ENCODE measurements at regions of chr18 and their contacts with region 1.

Region 1: DNA sequence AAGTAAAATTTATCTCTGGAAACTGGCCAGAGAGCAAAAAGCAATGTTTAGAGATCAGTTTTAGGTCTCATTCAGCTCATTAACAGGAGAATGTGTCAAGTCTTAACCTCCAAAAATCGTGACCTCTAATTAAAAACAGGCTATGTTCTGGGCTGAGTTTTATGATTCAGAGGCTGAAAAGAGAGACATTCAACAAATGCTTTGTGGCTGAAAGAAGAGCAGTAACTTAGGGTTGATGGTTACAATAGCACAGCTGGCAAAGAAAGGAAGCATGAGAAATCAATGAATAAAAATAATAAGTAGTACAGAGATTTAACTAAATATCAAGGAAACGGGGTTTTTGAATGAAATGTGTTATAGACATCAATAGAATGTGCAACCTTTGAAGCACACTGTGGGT is 13.1 kb downstream of the TGIF1 start:
- DNase-seq: no peak
- H3K4me3 ChIP-seq: no peak overlapping the region
- H3K27ac ChIP-seq: no peak overlapping the region
- H3K27me3 ChIP-seq: no peaks in the 10 kb centered on the region
- CTCF ChIP-seq: no peak

Region 2: DNA sequence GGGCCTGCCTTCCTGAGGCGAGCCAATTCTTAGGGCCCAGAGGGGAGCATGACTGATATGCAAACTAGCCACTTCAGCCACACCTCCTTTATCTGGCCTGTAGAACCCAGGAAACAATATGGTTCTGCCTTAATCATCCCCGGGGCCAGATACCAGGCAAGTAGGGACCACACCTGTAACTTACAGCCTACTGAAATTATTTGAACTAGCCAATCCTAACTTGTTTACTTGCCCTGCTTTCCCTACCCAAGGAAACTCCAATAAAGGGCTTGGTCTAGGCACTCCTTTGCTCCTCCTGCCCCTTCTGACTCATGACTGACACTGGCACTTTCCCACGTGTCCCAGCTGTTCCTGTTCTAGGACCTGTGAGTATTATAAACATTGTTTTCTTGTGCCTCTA is 300.9 kb before region 1 on chr18:
- intact Hi-C with region 1: no loop called
- DNase-seq: no peak
- H3K4me3 ChIP-seq: no peak overlapping the region
- H3K27ac ChIP-seq: no peak overlapping the region
- H3K27me3 ChIP-seq: no peaks in the 10 kb centered on the region
- CTCF ChIP-seq: no peak

Region 3: DNA sequence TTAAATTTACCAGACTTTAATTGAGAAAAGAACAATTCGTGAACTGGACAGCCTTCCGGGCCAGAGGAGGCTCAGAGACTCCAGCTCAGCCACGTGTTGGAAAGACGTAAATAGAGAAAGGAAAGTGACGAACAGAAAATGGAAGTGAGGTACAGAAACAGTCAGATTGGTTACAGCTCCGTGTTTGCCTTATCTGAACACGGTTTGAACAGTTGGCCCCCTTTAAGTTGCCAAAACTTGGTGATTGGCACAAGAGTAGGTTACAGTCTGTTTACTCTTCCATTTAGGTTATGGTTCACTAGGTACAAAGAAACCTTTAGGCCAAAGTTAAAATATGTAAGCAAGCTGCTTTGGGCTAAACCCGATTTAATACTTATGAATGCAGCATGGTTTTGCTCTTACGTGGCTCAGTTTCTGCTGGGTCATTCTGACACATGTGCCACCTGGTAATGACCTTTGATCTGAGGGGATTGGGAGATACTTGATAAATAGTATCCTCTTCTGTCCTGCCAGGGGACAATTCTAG is 78.3 kb before region 1 on chr18:
- intact Hi-C with region 1: no loop called
- DNase-seq: no peak
- H3K4me3 ChIP-seq: no peak overlapping the region
- H3K27ac ChIP-seq: no peak overlapping the region
- H3K27me3 ChIP-seq: peaks cover 0 to 3% (median 0%) of the 10 kb centered on the region in 45 donors
- CTCF ChIP-seq: no peak

Region 4: DNA sequence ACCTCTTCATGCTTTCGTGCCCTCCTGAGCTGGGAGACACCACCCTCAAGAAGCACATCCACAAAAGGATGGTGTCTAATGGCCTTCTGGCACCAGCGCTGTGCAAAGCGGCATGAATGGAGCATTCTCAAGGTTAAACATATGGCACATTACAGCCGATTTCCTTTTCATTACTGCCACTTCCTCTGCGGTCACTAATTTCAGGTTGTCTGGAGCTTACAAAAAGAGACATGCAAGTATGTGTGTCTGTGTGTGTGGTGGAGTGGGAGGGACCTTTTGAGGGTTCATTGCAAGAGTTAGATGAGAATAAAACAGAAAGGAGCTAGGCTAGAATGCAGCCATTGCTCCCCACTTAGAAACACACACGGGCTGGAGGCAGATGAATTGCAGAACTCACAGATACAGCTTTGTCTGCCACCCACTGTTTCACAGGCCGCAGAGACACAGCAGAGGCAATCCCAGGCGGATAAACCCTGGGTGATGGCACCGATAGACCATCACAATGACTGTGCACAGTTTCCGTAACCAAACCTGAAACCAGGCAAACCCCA is 62.9 kb after region 1 on chr18:
- intact Hi-C with region 1: loop called in 1 of 2 experiments (anchors 5 kb)
- DNase-seq: peak in 9 of 10 donors; percentile 47 to 70 (median 63)
- H3K4me3 ChIP-seq: peak overlapping the region in 54 of 59 donors; percentile 0 to 66 (median 40)
- H3K27ac ChIP-seq: peak overlapping the region in 58 of 59 donors; percentile 14 to 93 (median 74)
- H3K27me3 ChIP-seq: no peaks in the 10 kb centered on the region
- CTCF ChIP-seq: peak in 8 of 56 donors; percentile 8 to 17 (median 13)

Region 5: DNA sequence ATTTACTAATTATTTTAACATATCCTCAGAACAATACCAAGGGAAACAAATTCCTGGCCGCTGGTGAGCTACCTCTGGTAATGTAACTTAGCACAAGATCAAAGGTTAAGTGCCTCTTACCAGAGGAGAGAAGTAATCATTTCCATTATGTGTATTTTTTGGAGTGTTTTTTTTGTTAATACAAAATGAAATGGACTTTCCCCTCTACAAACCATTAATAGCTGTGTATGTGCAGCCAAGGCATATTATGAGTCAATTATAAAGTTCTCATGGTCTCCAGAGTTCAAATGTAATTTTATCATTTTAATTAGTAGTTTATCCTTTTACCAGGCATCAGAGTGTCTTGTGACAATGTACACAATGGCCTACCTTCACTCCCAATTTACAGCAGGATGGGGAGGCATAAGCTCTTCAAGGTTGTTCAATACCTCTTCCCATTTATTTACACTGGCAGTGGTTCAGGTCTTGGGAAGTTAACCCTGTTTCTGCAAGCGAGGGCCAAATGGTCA is 229.1 kb after region 1 on chr18:
- intact Hi-C with region 1: no loop called
- DNase-seq: no peak
- H3K4me3 ChIP-seq: no peak overlapping the region
- H3K27ac ChIP-seq: no peak overlapping the region
- H3K27me3 ChIP-seq: no peaks in the 10 kb centered on the region
- CTCF ChIP-seq: no peak

Measured in dorsolateral prefrontal cortex (tissue), 120 donors.